ENCODE measurements at regions of chr10 and their contacts with region 1.

Region 1: DNA sequence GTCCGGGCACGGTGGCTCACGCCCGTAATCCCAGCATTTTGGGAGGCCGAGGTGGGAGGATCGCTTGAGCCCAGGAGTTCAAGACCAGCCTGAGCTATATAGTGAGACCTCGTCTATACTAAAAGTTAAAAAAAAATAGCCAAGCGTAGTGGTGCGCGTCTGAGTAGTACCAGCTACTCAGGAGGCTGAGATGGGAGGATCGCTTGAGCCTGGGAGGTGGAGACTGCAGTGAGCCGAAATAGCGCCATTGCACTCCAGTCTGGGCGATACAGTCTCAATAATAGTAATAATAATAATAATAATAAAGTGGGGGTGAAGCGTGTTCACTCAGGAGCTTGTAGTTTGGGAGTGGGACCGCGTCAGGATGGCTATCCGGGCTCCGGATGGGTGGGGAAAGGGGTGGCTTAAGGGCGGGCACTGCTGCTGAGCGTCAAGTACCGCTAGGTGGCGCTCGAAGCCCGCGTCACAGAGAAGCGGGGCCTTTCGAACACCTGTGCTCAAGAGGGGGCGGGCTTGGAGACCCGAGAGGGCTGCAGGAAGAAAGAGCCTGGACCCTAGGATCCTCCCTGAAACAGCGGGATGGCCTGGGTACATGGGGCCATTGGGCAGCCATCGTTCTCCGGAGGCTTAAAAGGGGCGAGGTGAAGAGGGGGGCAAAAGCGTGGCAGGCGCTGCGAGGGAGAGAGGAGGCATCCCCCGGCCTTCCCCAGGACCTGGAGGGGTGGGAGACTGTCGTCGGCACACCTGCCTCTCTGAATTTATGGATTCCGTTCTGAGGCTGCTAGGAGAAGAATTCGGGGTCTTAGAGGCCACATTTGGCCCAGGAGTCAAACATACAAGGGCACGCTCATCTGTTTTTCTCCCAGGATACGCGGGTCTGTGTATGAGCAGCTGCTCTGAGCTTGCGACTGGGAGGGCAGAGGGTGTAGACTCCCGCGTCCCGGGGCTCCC is 14.5 kb downstream of the LBX1 start:
- DNase-seq: peak; percentile 68 to 90
- ATAC-seq: peak; percentile 83
- H3K4me3 ChIP-seq: no peak overlapping the region
- H3K27ac ChIP-seq: no peak overlapping the region
- H3K4me1 ChIP-seq: no peaks in the 10 kb centered on the region
- H3K27me3 ChIP-seq: no peaks in the 10 kb centered on the region

Region 2: DNA sequence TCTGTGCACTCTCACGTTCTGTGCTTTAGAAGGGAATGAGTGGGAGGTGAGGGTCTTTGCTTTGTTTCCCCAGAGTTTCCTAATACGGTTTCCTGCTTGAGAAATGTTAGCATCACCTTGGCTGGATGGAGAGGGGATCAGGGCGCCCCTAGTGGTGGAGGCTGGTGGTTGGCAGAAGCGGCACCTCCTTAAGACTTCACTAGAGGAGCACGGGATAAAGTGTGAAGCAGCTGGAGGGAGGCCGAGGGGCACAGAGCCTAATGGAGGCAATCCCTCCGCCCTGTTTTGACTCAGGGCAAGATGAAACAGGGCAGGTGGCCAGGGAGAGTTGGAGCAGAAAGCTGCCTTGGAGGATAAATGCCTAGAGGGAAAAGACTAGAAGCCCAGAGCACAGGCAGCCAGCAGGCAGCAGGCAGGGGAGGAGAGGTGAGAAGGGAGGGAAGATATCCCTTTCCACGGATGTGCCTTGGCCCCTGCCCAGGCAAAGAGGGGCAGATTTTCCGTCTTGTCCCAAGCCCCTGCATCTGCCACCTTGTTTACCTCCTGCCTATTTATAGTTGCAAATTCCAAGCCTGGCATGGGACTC is 83.3 kb after region 1 on chr10:
- intact Hi-C with region 1: loop called in 1 of 2 experiments (anchors 10 kb)
- DNase-seq: peak in 1 of 2 donors; percentile 88
- ATAC-seq: no peak
- H3K4me3 ChIP-seq: no peak overlapping the region
- H3K27ac ChIP-seq: no peak overlapping the region
- H3K4me1 ChIP-seq: no peaks in the 10 kb centered on the region
- H3K27me3 ChIP-seq: peaks cover 0 to 1% of the 10 kb centered on the region in 2 donors

Region 3: DNA sequence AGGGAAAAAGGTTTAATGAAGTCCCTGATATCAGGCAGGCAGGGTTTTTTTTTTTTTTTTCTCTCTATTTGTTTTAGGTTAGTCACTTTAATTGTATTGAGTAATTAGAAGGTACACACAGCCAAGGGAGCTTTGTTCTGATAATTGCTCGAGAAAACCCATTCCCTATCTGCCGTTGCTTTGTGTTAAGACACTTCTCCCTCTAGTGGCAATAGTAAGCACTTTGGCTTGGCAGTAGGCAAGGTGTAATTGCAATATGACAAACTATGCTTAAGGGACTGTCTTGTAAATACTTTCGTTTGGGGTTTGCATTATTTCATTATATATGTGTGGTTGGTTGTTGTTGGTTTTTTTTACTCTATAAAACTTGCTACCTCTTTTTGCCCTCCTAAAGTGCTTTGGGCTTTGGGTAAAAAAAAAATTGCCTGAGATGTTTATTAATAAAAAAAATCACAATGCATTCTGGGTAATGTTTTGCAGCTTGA is 252.6 kb after region 1 on chr10:
- intact Hi-C with region 1: loop called (anchors 10 kb)
- DNase-seq: no peak
- ATAC-seq: peak; percentile 68
- H3K4me3 ChIP-seq: no peak overlapping the region
- H3K27ac ChIP-seq: no peak overlapping the region
- H3K4me1 ChIP-seq: no peaks in the 10 kb centered on the region
- H3K27me3 ChIP-seq: no peaks in the 10 kb centered on the region

Region 4: DNA sequence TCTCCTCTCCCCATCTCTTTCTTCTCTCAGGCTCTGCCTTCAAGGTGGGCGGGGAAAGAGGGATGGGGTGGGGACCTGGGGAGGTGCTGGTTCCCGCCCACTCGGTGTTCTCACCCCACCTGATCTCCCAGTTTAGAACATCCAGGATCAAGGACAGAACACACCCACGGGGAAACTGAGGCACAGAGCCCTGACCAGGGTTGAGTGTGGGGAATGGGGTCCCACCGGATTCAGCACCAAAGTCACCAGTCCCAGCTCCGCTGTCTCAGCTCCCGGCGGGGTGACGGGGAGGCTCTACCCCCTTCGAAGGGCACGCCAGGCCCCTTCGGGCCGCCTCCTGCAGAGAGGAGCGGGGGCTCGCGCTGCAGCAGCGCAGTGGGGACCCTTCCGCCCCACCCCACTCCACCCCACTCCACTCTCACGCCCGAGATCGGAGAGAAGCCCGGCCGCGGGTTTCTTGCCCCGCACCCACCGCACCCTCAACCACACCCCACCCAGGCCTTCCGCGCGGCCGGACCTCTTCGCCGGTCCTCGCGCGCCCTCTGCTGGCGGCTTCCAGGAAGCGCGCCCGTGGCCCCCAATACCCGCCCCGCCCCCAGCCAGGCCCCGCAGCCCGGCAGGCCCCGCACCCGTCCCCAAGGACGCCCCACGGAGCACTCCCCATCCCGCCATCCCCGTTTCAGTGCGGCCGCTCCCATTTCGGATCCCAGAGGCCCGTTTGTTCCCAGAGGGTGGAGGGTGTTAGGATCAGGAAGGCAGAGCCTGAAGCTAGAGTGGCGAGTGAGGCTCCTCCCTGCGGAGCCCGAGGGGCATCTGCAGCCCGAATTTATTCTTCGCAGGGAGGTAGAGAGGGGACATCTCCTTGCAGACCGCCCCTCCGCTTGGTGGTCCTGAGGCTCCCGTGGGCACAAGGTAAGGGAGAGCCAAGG is 355.4 kb after region 1 on chr10:
- intact Hi-C with region 1: loop called (anchors 2 kb)
- DNase-seq: peak; percentile 86 to 95
- ATAC-seq: peak; percentile 94
- H3K4me3 ChIP-seq: no peak overlapping the region
- H3K27ac ChIP-seq: no peak overlapping the region
- H3K4me1 ChIP-seq: no peaks in the 10 kb centered on the region
- H3K27me3 ChIP-seq: no peaks in the 10 kb centered on the region

Region 5: GRCh38 chr10:101782811-101783735 is 568.4 kb after region 1 on chr10 and contains the start of gene NPM3:
- intact Hi-C with region 1: loop called in 1 of 2 experiments (anchors 5 kb)
- DNase-seq: peak; percentile 89 to 94
- ATAC-seq: peak; percentile 75
- H3K4me3 ChIP-seq: peak within 1 kb of the TSS; percentile 43 to 49
- H3K27ac ChIP-seq: no peak within 1 kb of the TSS
- H3K4me1 ChIP-seq: no peaks in the 10 kb centered on the region
- H3K27me3 ChIP-seq: no peaks in the 10 kb centered on the region
- total RNA-seq, gene NPM3: 12.7 to 19.8 TPM

Region 6: GRCh38 chr10:101807158-101807557 is 592.4 kb after region 1 on chr10:
- intact Hi-C with region 1: no loop called
- DNase-seq: no peak
- ATAC-seq: no peak
- H3K4me3 ChIP-seq: no peak overlapping the region
- H3K27ac ChIP-seq: no peak overlapping the region
- H3K4me1 ChIP-seq: no peaks in the 10 kb centered on the region
- H3K27me3 ChIP-seq: no peaks in the 10 kb centered on the region